HEK293T (cell line): ENCODE measurements at regions of chr1 and their contacts with region 1.

Region 1: DNA sequence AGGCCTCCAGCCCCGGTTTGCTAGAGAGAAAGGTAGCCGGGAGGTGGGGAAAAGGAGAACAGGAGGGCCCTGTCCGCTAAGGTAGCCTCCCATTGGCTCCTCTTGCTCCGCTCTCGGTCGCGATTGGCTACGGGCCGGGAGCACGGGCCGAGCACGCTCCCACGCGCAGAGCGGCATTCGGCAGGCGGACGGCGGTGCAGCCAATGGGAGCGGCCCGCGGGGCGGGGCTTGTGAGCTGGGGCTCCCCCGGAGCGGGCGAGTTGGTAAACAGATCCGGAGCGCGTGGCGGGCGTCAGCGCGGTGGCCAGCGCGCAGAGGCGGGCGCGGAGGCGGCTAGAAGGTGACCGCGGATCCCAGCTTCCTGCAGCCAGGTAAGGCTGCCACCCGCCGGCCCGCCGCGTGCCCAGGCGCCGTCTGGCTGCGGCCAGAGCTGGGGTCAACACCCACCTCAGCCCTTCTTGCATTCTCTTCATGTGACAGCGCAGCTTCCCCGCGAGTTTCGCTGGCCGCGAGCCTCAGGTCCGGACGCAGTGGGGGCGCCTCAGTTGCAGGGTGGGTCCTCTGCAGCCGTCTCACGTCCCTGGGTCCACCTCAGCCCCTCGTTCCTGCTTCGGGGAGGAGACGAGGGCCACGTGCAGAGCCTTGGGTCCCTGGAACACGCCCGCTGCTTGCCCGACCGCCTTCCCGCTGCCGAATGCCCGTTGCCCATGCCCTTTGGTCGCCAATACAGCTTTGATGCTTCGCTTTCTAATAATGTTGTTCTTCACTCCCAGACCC is at the start of gene COQ8A:
- DNase-seq: peak; percentile 99

Region 2: DNA sequence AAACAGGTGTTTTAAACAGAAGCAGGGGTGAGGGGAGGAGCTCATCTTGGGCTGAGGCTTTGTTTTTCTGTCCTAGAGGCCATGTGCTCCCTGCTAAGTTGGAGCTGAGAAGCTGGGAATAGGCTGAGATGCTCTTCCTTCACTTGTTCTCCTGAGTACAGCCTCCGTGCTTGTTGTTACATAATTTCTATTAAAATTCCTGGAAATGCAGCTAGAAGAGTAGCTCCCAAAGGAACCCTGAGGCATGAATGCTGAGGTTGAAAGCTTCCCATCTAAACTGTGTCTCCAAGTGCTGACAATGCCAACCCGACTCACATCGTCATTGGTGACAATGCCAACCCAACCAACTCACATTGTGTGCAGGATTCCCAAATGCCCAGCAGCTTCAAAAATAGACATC is 188.5 kb before region 1 on chr1:
- CTCF ChIA-PET with region 1: no interaction called
- POLR2A ChIA-PET with region 1: no interaction called
- DNase-seq: no peak

Region 3: GRCh38 chr1:226912587-226913176 is 27.5 kb before region 1 on chr1:
- CTCF ChIA-PET with region 1: interaction called, 14 read pairs
- POLR2A ChIA-PET with region 1: interaction called, 4 read pairs
- DNase-seq: peak; percentile 78

Region 4: GRCh38 chr1:226950871-226951270 is 10.7 kb after region 1 on chr1:
- CTCF ChIA-PET with region 1: no interaction called
- POLR2A ChIA-PET with region 1: interaction called, 12 read pairs
- DNase-seq: no peak

Region 5: DNA sequence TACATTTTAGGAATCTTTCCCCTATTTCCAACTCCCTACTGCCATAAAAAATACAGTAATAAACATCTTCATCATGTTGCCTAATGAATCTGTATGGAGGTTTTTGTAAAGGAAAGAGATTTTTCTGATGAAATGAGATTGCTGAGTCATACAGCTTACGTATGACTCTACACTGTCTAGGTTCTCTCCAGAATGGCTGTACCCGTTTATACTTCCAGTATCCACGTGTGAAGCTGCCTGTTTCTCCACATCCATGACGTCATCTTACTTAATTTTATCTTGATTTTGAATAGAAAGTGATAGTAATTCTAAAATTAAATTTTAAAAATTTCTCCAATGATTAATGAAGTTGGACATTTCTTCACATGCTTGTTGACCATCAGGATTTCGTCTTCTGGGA is 103.5 kb after region 1 on chr1:
- CTCF ChIA-PET with region 1: no interaction called
- POLR2A ChIA-PET with region 1: no interaction called
- DNase-seq: no peak